ENCODE measurements at regions of chr3 and their contacts with region 1.

Region 1: DNA sequence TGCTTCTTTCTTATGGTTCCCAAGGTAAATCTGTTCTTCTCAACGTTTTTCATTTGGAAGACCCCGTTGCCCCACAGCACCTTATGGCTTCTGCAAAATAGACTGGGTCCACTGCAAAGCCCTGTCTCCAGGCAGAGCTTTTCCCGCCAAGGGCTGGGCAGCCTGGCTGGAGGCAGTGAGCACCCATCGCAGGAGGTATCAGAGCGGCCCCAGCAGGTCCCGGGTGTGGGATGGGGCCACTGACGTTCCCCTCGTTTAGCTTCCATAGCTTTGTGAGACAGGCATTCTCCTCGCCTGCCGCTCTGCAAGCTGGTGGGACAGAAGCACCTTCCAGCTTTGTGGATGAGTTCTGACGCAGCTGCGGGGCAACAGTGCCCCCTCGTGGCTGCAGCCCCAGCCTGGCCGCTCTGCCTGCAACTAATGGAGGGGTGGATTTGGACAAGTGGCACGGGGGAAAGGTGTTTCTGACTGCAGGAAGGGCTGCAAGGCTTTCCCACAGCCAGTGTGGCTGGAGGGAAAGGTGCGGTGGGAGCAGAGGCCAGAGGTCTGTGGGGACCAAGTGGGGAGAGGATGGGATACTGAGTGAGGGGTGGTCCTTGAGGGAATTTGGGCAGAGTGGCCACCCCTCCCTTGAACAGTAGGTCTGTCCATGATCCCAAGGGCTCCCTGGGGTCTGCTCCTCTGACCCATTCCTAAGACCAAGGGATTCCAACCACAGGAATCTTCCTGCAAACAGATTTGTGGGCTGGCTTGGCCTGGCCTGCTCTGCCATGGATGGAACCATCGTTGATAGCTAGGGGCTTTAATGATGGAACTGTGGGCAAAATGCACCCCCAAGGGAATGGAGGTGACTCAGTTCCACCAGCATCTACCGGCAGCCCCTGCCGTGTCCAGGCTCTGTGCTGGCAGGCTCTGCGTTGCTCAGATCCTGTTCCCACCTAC is 99.4 kb downstream of the FBLN2 start:
- DNase-seq: peak; percentile 80
- ATAC-seq: peak; percentile 61
- H3K4me3 Mint-ChIP-seq: no peak overlapping the region
- H3K27ac Mint-ChIP-seq: no peak overlapping the region
- H3K4me1 Mint-ChIP-seq: peaks cover 18% of the 10 kb centered on the region
- H3K27me3 Mint-ChIP-seq: peaks cover 44% of the 10 kb centered on the region

Region 2: GRCh38 chr3:13440204-13440817 is 208.0 kb before region 1 on chr3:
- CTCF ChIA-PET with region 1: no interaction called
- DNase-seq: no peak
- ATAC-seq: no peak
- H3K4me3 Mint-ChIP-seq: no peak overlapping the region
- H3K27ac Mint-ChIP-seq: no peak overlapping the region
- H3K4me1 Mint-ChIP-seq: no peaks in the 10 kb centered on the region
- H3K27me3 Mint-ChIP-seq: peaks cover 15% of the 10 kb centered on the region

Region 3: GRCh38 chr3:13461169-13462158 is 186.9 kb before region 1 on chr3:
- CTCF ChIA-PET with region 1: interaction called, 12 read pairs
- DNase-seq: peak; percentile 87
- ATAC-seq: peak; percentile 96
- H3K4me3 Mint-ChIP-seq: no peak overlapping the region
- H3K27ac Mint-ChIP-seq: no peak overlapping the region
- H3K4me1 Mint-ChIP-seq: no peaks in the 10 kb centered on the region
- H3K27me3 Mint-ChIP-seq: peaks cover 28% of the 10 kb centered on the region

Region 4: GRCh38 chr3:13487403-13487802 is 160.9 kb before region 1 on chr3:
- CTCF ChIA-PET with region 1: interaction called, 29 read pairs
- DNase-seq: no peak
- ATAC-seq: no peak
- H3K4me3 Mint-ChIP-seq: no peak overlapping the region
- H3K27ac Mint-ChIP-seq: no peak overlapping the region
- H3K4me1 Mint-ChIP-seq: peaks cover 6% of the 10 kb centered on the region
- H3K27me3 Mint-ChIP-seq: no peaks in the 10 kb centered on the region

Region 5: DNA sequence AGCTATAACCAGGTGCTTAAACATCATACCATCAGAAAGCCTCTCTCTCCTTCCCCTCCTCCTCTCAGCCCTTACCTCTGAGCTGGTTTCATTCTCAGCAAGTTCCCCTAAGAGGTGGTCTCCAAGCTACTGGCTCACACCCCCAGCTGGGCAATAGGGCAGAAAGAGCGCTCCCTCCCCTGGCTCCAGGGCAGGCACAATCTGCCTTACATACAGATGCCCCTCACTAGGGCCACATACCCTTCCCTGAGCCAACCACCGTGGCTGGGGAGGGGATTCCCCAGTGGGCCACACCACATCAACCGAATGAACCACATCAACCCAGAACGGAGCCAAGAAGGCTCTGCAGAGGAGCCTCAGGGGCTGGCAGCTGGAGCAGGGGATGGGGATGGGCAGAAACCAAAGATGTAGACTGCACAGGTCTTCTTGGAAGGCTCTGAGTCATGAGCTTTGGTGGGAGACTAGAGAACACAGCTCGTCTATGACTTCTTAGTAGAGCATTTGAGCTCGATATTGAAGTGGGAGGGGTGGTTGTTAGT is 104.0 kb before region 1 on chr3:
- CTCF ChIA-PET with region 1: interaction called, 24 read pairs
- DNase-seq: peak; percentile 84
- ATAC-seq: peak; percentile 91
- H3K4me3 Mint-ChIP-seq: peak overlapping the region; percentile 7
- H3K27ac Mint-ChIP-seq: peak overlapping the region; percentile 42
- H3K4me1 Mint-ChIP-seq: peaks cover 34% of the 10 kb centered on the region
- H3K27me3 Mint-ChIP-seq: peaks cover 47% of the 10 kb centered on the region

Region 6: GRCh38 chr3:13884851-13885703 is 236.7 kb after region 1 on chr3:
- CTCF ChIA-PET with region 1: interaction called, 205 read pairs
- DNase-seq: peak; percentile 72
- ATAC-seq: peak; percentile 81
- H3K4me3 Mint-ChIP-seq: no peak overlapping the region
- H3K27ac Mint-ChIP-seq: no peak overlapping the region
- H3K4me1 Mint-ChIP-seq: peaks cover 2% of the 10 kb centered on the region
- H3K27me3 Mint-ChIP-seq: peaks cover 42% of the 10 kb centered on the region